ENCODE measurements at regions of chr6 and their contacts with region 1.

Region 1: DNA sequence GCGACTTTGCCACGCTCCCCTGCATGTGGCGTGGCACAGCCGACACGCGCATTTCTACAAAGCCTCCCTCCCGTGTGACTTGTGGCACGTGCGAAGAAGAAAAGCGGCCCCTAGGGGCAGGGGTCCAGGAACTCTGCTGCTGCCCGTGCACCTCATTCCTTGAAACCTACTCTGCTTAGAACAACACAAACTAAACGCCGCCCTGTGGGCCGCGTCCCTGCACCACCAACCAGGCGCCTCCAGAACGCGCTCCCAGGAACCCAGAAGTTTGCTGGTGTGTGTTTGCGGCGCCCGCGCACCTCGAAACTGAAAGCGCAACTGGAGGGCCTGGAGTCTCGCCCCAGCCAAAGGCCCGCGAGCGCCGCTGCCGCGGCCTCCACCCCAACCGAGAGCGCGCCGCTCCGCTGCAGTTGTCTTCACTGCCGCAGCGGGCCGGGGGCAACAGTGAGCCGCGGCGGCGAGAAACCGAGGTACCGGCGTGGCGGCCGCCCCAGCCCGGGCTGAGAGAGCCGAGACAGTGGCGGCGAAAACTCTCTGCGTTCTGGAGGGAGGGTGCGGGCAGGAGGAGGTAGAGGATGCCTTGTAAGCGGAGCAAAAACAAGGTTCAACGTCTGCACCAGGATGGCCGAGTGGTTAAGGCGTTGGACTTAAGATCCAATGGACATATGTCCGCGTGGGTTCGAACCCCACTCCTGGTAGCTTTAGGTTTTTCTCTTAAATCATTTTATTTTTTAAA is 65.8 kb downstream of the STX11 start:
- DNase-seq: peak; percentile 87
- ATAC-seq: peak; percentile 85
- H3K4me3 Mint-ChIP-seq: peak overlapping the region; percentile 97
- H3K27ac Mint-ChIP-seq: peak overlapping the region; percentile 100
- H3K4me1 Mint-ChIP-seq: peaks cover 36% of the 10 kb centered on the region
- H3K27me3 Mint-ChIP-seq: peaks cover 2% of the 10 kb centered on the region
- CTCF ChIP-seq: no peak

Region 2: GRCh38 chr6:142474531-142475289 is 1741.4 kb before region 1 on chr6:
- CTCF ChIA-PET with region 1: no interaction called
- POLR2A ChIA-PET with region 1: no interaction called
- intact Hi-C with region 1: loop called (anchors 5 kb)
- DNase-seq: no peak
- ATAC-seq: peak; percentile 54
- H3K4me3 Mint-ChIP-seq: no peak overlapping the region
- H3K27ac Mint-ChIP-seq: no peak overlapping the region
- H3K4me1 Mint-ChIP-seq: no peaks in the 10 kb centered on the region
- H3K27me3 Mint-ChIP-seq: peaks cover 3% of the 10 kb centered on the region
- CTCF ChIP-seq: peak; percentile 81

Region 3: GRCh38 chr6:143842902-143843676 is 373.0 kb before region 1 on chr6 and contains the start of gene LTV1:
- CTCF ChIA-PET with region 1: no interaction called
- POLR2A ChIA-PET with region 1: interaction called, 3 read pairs
- intact Hi-C with region 1: loop called (anchors 1 kb)
- DNase-seq: peak; percentile 84
- ATAC-seq: peak; percentile 97
- H3K4me3 Mint-ChIP-seq: peak within 1 kb of the TSS; percentile 92
- H3K27ac Mint-ChIP-seq: peak within 1 kb of the TSS; percentile 96
- H3K4me1 Mint-ChIP-seq: peaks cover 17% of the 10 kb centered on the region
- H3K27me3 Mint-ChIP-seq: no peaks in the 10 kb centered on the region
- CTCF ChIP-seq: no peak
- total RNA-seq, gene LTV1: 37.0 and 40.3 TPM in 2 replicates

Region 4: DNA sequence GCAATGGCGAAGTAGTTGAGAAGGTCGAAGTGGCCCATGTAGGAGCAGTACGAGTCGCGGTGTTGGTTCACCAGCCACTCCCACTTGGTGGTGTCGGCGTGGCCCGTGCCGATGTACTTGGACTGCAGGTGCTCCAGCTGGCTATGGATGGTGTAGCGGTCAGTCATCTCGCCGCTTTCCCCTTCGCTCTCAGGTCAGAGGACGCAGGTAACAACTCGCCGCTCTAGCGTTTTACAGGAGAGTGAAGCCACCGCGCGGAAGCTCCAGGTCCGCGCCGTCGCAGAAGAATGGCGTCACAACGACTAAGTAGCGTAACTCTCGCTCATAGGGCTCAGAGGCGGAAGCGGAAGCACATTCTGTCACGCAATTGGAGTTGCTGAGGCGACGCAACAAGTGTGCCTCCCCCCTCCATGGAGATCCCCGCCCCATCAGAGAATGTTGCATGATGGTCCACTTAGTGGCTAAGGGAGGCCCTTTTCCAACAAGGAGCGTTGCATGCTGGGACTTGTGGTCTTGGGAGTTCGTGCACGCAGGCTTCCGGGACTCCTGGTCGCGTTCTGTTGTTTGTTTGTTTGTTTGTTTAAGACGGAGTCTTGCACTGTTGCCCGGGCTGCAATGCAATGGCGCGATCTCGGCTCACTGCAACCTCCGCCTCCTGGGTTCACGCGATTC is 120.6 kb before region 1 on chr6 and contains the start of gene SF3B5:
- CTCF ChIA-PET with region 1: interaction called, 21 read pairs
- POLR2A ChIA-PET with region 1: interaction called, 7 read pairs
- intact Hi-C with region 1: loop called (anchors 1 kb)
- DNase-seq: peak; percentile 93
- ATAC-seq: peak; percentile 96
- H3K4me3 Mint-ChIP-seq: peak within 1 kb of the TSS; percentile 99
- H3K27ac Mint-ChIP-seq: peak within 1 kb of the TSS; percentile 99
- H3K4me1 Mint-ChIP-seq: peaks cover 24% of the 10 kb centered on the region
- H3K27me3 Mint-ChIP-seq: no peaks in the 10 kb centered on the region
- CTCF ChIP-seq: no peak
- total RNA-seq, gene SF3B5: 144 and 147 TPM in 2 replicates

Region 5: DNA sequence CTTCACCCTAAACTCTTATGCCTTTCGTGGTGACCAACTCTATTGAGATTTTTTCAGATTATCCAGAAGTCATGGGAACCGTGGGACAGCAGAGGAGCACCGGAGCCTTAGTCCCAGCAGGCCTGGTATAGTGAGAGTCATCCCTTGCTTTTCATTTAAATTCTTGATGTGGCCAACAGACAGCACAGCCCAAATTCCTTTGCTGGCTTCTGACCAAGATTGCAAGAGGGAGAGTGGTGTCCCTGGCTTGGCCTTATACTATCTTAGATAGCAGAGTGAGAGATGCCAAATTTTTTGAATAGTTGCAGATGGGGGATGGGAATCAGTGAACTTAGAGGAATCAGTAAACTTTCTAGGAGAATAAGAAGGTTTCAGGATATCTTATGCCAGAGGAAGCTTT is 58.0 kb before region 1 on chr6:
- CTCF ChIA-PET with region 1: interaction called, 3 read pairs
- POLR2A ChIA-PET with region 1: no interaction called
- intact Hi-C with region 1: loop called (anchors 2 kb)
- DNase-seq: no peak
- ATAC-seq: no peak
- H3K4me3 Mint-ChIP-seq: no peak overlapping the region
- H3K27ac Mint-ChIP-seq: no peak overlapping the region
- H3K4me1 Mint-ChIP-seq: peaks cover 48% of the 10 kb centered on the region
- H3K27me3 Mint-ChIP-seq: no peaks in the 10 kb centered on the region
- CTCF ChIP-seq: no peak

Region 6: GRCh38 chr6:144181639-144182038 is 34.5 kb before region 1 on chr6:
- CTCF ChIA-PET with region 1: no interaction called
- POLR2A ChIA-PET with region 1: no interaction called
- intact Hi-C with region 1: no loop called
- DNase-seq: no peak
- ATAC-seq: no peak
- H3K4me3 Mint-ChIP-seq: no peak overlapping the region
- H3K27ac Mint-ChIP-seq: no peak overlapping the region
- H3K4me1 Mint-ChIP-seq: peaks cover 30% of the 10 kb centered on the region
- H3K27me3 Mint-ChIP-seq: no peaks in the 10 kb centered on the region
- CTCF ChIP-seq: no peak

Region 7: DNA sequence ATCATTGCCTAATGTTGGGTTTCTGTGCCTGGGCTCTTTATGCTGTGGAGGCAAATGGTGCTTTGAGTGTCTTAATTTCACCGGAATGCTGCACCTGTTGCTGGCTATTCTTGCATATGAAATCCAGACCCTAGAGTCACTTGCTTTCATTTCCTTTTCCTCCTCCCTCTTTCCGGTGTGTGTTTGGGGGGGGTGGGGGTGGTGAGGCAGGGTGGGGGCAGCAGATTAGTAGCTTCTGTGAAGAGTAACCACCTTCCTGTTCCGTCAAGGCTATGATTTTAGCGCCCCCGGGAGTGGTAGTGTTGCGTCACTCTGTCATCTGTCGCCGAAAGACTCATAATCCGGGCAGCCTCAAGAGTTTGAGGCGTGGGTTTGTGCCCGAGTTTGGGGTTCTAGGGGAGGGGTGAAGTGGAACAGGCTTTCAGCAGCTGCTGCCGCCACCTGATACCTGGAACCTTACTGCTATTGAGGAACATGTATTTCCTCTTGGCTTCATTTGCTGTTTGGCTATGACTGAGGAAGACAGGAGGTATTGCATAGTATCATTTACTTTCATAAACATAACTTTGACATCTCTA is 118.1 kb after region 1 on chr6:
- CTCF ChIA-PET with region 1: no interaction called
- POLR2A ChIA-PET with region 1: interaction called, 3 read pairs
- intact Hi-C with region 1: loop called (anchors 1 kb)
- DNase-seq: peak; percentile 52
- ATAC-seq: peak; percentile 76
- H3K4me3 Mint-ChIP-seq: peak overlapping the region; percentile 78
- H3K27ac Mint-ChIP-seq: peak overlapping the region; percentile 88
- H3K4me1 Mint-ChIP-seq: peaks cover 71% of the 10 kb centered on the region
- H3K27me3 Mint-ChIP-seq: no peaks in the 10 kb centered on the region
- CTCF ChIP-seq: no peak

Region 8: GRCh38 chr6:144482142-144482541 is 266.0 kb after region 1 on chr6:
- CTCF ChIA-PET with region 1: interaction called, 29 read pairs
- POLR2A ChIA-PET with region 1: no interaction called
- intact Hi-C with region 1: loop called (anchors 1 kb)
- DNase-seq: peak; percentile 39
- ATAC-seq: peak; percentile 91
- H3K4me3 Mint-ChIP-seq: no peak overlapping the region
- H3K27ac Mint-ChIP-seq: peak overlapping the region; percentile 41
- H3K4me1 Mint-ChIP-seq: no peaks in the 10 kb centered on the region
- H3K27me3 Mint-ChIP-seq: no peaks in the 10 kb centered on the region
- CTCF ChIP-seq: no peak

Measured in activated B cell treated with CpG ODN at 0.5 μM for 24 hours (primary cell).